ENCODE measurements at regions of chr12 and their contacts with region 1.

Region 1: GRCh38 chr12:6383572-6384498 is at the start of gene LTBR:
- DNase-seq: peak; percentile 98 to 99
- ATAC-seq: peak; percentile 98
- H3K4me3 ChIP-seq: peak within 1 kb of the TSS; percentile 36 to 48
- H3K27ac ChIP-seq: peak within 1 kb of the TSS; percentile 65 to 88
- H3K4me1 ChIP-seq: no peaks in the 10 kb centered on the region
- H3K27me3 ChIP-seq: no peaks in the 10 kb centered on the region
- total RNA-seq, gene LTBR: 83.1 to 103 TPM

Region 2: DNA sequence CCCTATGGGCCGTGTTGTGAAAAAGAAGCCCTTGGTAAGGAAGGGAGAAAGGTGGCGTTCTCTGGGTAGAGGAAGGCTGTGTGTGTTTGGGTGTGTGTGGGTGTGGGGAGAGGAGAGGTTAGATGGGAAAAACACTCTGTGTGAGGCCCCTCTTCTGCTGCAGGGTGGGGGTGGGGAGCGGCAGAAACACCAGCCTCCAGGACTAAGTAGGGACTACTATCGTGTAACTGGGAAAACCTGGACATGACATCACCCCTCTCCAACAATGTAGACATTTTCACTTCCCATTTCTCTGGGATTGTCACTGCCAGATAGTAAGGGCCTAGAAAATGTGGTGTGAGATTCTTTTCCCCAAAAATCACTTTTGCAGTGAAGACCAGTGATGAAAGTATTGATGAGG is 746.9 kb before region 1 on chr12:
- intact Hi-C with region 1: no loop called
- DNase-seq: no peak
- ATAC-seq: no peak
- H3K4me3 ChIP-seq: no peak overlapping the region
- H3K27ac ChIP-seq: no peak overlapping the region
- H3K4me1 ChIP-seq: no peaks in the 10 kb centered on the region
- H3K27me3 ChIP-seq: no peaks in the 10 kb centered on the region

Region 3: GRCh38 chr12:5733136-5733755 is 650.6 kb before region 1 on chr12:
- intact Hi-C with region 1: no loop called
- DNase-seq: no peak
- ATAC-seq: no peak
- H3K4me3 ChIP-seq: no peak overlapping the region
- H3K27ac ChIP-seq: no peak overlapping the region
- H3K4me1 ChIP-seq: no peaks in the 10 kb centered on the region
- H3K27me3 ChIP-seq: no peaks in the 10 kb centered on the region

Region 4: DNA sequence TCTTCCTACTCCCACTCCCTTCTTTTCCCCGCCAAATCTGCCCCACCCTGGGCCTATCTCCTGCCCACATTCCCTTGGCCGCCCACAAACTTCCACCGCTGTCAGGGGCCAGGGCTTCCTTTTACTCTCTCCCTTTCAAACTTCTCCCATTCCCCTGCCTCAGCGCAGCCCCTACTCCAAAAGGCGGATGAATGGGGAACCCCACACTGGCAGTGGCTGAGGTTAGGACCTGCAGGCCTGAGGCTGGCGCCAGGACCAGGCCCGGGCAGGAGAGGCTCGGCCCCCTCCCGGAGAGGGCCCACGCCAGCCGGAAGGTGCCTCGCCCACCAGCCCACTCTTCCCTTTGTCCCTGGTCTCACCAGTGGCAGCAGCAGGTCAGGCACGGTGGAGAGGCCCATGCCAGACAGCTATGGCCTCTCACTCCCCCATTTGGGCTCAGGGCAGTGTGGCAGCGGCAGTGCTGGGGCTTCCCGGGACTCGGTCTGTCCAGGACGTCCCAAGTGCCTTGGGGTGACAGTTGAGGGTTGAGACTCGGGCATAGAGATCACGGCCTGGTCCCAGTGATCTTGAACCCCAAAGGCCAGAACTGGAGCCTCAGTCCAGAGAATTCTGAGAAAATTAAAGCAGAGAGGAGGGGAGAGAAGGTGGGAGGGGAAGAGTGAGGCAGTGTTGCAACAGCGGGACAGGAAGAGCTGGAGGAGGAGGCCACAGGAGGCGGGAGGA is 42.3 kb before region 1 on chr12 and contains the start of gene TNFRSF1A:
- intact Hi-C with region 1: loop called (anchors 2 to 5 kb)
- DNase-seq: peak in 1 of 2 donors; percentile 90
- ATAC-seq: peak; percentile 82
- H3K4me3 ChIP-seq: peak within 1 kb of the TSS; percentile 32 to 74
- H3K27ac ChIP-seq: peak within 1 kb of the TSS; percentile 29 to 96
- H3K4me1 ChIP-seq: peaks cover 2 to 3% of the 10 kb centered on the region in 2 donors
- H3K27me3 ChIP-seq: no peaks in the 10 kb centered on the region
- total RNA-seq, gene TNFRSF1A: 190 to 236 TPM

Region 5: GRCh38 chr12:6443361-6443983 is 59.6 kb after region 1 on chr12:
- intact Hi-C with region 1: no loop called
- DNase-seq: no peak
- ATAC-seq: no peak
- H3K4me3 ChIP-seq: no peak overlapping the region
- H3K27ac ChIP-seq: no peak overlapping the region
- H3K4me1 ChIP-seq: no peaks in the 10 kb centered on the region
- H3K27me3 ChIP-seq: no peaks in the 10 kb centered on the region

Measured in aorta (tissue), 5 donors.